Lower leg skin (tissue), 4 donors: ENCODE measurements at regions of chr7 and their contacts with region 1.

Region 1: GRCh38 chr7:21253740-21254687 is 173.9 kb upstream of the SP4 start:
- DNase-seq: peak in 1 of 2 donors; percentile 23
- H3K4me3 ChIP-seq: no peak overlapping the region
- CTCF ChIP-seq: no peak
- POLR2A ChIP-seq: no peak

Region 2: DNA sequence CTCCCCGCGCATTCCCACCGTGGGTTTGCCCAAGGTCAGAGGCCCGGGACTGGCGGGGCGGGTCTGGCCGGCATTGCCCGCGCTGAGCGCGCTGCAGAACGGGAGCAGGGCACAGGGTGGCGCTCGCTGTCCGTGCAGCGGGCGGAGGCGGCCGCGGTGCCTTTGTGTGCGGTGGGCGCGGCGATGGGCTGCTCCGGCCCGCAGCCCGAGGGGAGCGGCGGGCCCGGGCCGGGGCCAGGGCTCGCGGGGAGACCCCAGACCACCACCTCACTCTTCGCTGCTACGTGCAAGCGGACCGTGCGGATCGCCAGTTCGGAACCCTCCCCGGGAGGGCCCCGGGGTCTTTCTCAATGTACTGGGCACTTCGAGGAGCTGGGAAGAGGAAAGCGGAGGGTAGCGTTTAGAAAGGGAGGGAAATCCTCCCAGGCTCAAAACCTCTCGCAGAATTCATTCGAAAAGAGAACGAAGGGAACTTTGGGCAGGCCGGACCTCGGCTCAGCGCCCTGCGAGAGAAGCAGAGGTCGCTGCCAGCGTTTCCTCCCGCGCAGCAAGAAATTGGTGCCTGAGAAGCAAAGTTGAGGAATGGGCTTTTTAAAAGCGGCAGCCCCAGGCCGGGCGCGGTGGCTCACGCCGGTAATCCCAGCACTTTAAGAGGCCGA is 475.8 kb before region 1 on chr7:
- intact Hi-C with region 1: loop called (anchors 10 kb)
- DNase-seq: peak in 1 of 2 donors; percentile 82
- H3K4me3 ChIP-seq: no peak overlapping the region
- CTCF ChIP-seq: no peak
- POLR2A ChIP-seq: no peak

Region 3: GRCh38 chr7:21243265-21243664 is 10.7 kb before region 1 on chr7:
- intact Hi-C with region 1: no loop called
- DNase-seq: no peak
- H3K4me3 ChIP-seq: no peak overlapping the region
- CTCF ChIP-seq: no peak
- POLR2A ChIP-seq: no peak

Region 4: DNA sequence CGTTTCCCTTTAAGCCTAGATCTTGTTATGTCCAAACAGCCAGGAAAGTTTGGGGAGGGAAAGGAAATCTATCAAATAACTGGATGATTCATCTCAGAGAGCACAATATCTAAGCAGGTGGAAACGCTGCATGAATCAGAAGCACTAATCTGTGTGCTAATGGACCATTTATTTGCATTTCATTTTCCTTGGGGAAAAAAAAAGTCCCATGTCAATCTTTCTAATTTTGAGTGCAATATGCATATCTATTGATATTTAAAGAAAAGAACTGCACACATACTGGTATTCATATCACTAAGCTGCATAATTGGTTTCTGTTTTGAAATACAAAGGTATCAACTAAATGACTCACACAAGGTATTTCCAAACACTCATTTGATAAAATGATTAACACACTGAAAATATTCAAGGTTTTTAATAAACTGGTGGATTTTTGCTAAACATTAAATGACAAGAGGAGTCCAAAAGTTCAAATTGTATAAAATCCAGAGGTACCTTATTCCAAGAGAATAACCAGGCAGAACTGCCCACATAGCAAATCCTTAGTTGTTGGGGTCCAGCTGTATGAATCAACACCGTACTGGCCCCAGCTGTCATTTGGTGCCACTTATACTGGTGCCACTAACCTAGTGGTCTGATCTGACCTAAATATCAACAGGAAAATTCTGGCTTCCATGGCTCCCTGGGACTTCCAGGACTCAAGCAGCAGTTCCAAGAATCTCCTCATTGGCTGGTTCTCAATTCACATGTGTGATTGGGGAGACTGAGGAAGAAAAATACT is 51.6 kb after region 1 on chr7:
- intact Hi-C with region 1: no loop called
- DNase-seq: no peak
- H3K4me3 ChIP-seq: no peak overlapping the region
- CTCF ChIP-seq: no peak
- POLR2A ChIP-seq: no peak

Region 5: DNA sequence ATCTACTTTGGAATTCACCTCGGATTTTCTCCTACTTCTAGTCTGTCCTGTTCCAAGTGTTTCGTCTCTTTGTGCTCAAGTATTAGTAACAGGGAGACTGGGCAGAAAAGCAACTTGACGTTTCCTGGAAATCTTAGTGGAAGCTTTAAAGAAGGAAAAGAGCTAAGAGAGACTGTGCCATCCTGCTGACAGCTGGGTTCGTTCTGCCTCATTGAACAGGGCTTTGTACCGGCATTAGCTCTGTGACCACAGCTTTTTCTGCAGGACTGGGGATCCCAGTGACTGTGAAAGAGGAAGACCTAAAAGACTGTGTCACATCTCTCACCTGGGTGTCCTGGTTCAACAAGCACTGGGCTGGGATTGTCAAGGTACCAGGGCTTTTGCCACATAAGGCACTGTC is 762.5 kb after region 1 on chr7:
- intact Hi-C with region 1: loop called (anchors 2 kb)
- DNase-seq: no peak
- H3K4me3 ChIP-seq: no peak overlapping the region
- CTCF ChIP-seq: no peak
- POLR2A ChIP-seq: no peak

Region 6: GRCh38 chr7:23055582-23056178 is 1801.7 kb after region 1 on chr7:
- intact Hi-C with region 1: no loop called
- DNase-seq: peak in 1 of 2 donors; percentile 46
- H3K4me3 ChIP-seq: no peak overlapping the region
- CTCF ChIP-seq: no peak
- POLR2A ChIP-seq: no peak